ENCODE measurements at regions of chr5 and their contacts with region 1.

Region 1: GRCh38 chr5:17189381-17190036 is 27.9 kb upstream of the BASP1 start:
- DNase-seq: no peak
- H3K4me3 ChIP-seq: no peak overlapping the region
- CTCF ChIP-seq: peak; percentile 66

Region 2: DNA sequence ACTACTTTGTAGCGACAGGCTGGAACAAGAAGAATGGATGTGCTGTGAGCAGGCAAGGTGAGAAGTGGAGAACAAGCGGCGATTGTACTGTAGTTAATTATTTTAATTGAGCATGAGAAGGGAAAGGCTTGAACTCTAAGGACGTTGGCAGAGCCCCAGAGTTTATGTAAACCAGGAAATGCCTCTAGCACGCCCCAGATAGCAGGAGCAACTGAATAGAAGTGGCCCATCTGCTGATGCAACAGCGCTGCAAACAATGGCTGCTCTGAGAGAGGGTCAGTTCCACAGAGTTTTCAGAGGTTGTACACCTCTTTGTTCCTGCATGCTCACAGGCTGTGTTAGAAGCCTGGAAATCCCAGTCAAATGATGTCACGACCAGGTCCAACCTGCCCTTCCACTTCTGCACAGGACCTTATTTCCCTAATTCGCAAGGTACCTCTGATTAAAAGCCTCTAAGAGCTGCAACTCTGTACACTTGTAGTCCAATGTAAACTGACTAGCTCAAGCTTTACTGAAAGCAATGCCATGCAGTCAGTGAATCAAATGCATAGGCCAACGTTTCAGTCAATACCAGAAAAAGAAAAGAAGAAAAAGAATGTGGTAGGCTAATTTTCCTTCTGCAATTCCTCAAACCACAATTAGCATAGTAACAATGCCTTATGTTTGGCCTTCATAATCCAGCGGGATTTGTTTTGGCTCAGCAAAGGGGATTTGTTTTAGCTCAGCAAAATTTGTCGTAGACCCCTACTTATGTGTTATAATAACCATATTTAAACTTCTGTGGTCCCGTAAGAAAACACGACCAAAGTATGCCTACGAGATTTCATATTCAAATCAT is 453.1 kb before region 1 on chr5:
- CTCF ChIA-PET with region 1: interaction called, 14 read pairs
- POLR2A ChIA-PET with region 1: no interaction called
- DNase-seq: peak; percentile 24
- H3K4me3 ChIP-seq: no peak overlapping the region
- CTCF ChIP-seq: no peak

Region 3: GRCh38 chr5:16791036-16791705 is 398.3 kb before region 1 on chr5:
- CTCF ChIA-PET with region 1: interaction called, 189 read pairs
- POLR2A ChIA-PET with region 1: interaction called, 4 read pairs
- DNase-seq: no peak
- H3K4me3 ChIP-seq: no peak overlapping the region
- CTCF ChIP-seq: peak; percentile 22

Region 4: DNA sequence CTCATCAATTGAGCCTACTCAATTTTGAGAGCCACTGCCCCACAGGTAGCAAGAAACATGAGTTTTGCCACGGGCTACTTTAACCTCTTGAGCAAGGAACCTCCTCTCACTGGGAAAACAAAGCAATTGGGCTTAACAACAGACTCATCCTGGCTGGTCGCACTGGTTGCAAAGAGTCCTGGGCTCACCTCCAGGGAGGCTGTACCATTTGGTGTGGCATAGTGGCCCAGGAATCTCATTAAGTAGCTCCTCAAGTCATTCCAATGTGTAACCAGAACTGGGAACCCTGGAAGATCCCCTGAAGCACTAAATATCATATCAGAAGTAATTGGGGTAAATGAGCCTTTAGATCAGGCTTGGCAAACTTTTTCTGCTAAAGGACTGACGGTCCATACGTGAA is 331.9 kb before region 1 on chr5:
- CTCF ChIA-PET with region 1: interaction called, 14 read pairs
- POLR2A ChIA-PET with region 1: no interaction called
- DNase-seq: no peak
- H3K4me3 ChIP-seq: no peak overlapping the region
- CTCF ChIP-seq: no peak

Region 5: GRCh38 chr5:16916262-16916865 is 273.1 kb before region 1 on chr5:
- CTCF ChIA-PET with region 1: interaction called, 42 read pairs
- POLR2A ChIA-PET with region 1: no interaction called
- DNase-seq: peak; percentile 84
- H3K4me3 ChIP-seq: no peak overlapping the region
- CTCF ChIP-seq: no peak

Region 6: DNA sequence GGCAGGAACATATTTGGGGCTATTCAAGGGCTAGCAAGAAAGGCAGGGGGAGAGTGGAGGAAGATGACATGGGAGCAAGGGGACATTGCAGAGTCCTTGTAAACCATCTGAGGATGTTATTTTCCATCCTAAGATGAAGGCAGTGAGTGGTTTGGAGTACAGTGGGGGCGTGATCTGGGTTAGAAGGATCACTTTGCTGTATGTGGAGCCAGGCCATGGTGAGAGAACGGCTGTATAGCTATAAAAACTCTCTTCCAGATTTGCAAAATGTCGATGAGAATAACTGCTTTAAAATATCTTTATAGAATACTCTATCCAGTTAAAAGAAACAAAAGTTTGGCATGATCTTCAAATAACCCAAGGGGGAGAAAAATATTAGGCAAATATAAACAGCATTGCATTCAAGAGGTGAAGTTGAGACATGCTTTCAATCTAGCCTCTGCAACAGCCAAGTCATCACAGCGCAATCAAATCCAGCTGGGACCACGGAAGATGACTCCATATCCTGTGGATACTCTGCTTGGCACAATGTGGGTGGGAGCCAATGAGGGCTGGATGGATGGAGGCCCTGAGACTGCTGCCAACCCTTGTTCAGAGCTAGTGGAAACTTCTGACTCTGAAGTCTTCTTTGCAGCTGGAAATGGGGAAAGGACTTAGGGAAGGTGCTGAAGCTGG is 83.6 kb before region 1 on chr5:
- CTCF ChIA-PET with region 1: interaction called, 11 read pairs
- POLR2A ChIA-PET with region 1: no interaction called
- DNase-seq: no peak
- H3K4me3 ChIP-seq: no peak overlapping the region
- CTCF ChIP-seq: no peak